Psoas muscle (tissue), 8 donors: ENCODE measurements at regions of chr9 and their contacts with region 1.

Region 1: DNA sequence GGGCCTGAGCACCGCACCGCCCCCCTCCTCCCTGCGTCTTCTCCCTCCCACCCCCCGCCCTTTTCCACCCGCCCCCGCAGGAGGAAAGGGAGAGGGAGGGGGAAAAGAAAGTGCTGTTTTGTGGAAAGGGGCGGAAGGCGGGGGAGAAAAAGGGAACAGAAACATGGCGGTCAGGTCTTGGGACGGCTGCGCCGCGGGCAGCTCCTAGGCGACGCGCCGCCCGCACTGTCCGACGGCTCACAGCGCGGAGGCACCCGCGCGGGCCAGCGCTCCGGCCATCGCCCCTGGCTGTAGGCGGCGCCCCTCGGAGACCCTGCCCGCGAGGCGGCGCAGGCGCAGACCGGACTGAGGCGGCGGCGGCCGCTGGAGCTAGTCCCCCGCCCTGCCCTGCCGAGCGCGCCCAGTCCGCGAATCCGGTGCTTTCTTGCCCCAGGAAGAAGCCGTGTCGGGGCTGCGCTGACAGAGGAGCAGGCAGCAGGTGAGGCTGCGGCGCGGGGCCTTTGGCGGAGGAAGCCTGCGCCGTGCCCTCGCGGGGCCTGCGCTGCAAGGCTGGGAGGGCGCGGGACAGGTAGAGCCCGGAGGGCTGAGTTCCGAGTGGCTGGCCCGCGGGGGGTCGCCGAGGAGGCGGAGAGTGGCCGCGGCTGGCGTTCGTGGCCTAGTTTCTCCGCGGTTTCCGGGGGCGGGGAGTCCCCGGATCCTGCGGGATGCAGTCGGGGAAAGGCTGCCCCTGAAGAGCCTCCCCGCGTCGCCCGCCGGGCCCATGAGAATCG is at the start of gene DENND4C:
- DNase-seq: peak; percentile 86 to 92
- ATAC-seq: peak; percentile 88 to 91 (median 90)
- H3K4me3 ChIP-seq: peak within 1 kb of the TSS; percentile 100
- H3K27ac ChIP-seq: peak within 1 kb of the TSS; percentile 97
- H3K4me1 ChIP-seq: peaks cover 20% of the 10 kb centered on the region
- H3K27me3 ChIP-seq: no peaks in the 10 kb centered on the region
- CTCF ChIP-seq: peak; percentile 8
- total RNA-seq, gene DENND4C: 12.2 to 16.4 (median 13.9) TPM

Region 2: DNA sequence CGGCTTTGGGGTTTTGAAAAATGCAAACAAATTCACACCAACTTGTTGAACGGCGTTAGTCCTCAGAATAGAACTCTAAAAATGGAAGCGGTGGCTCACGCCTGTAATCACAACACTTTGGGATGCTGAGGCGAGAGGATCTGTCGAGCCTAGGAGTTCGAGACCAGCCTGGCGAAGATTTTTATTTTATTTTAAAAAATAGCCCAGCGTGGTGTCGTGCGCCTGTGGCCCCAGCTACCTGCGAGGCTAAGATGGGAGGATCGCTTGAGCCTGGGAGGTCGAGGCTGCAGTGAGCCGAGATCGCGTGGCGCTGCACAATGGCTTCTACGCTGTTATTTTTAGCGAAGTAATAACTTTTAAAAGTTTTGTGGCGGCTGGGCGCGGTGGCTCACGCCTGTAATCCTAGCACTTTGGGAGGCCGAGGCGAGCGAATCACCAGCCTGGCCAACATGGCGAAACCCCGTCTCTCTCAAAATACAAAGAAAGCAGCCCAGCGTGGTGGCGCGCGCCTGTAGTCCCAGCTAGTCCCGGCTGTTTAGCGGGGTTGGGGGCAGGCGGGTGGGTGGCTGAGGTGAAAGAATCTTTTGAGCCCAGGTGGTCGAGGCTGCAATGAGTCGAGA is 102.5 kb before region 1 on chr9:
- intact Hi-C with region 1: loop called in 1 of 2 experiments (anchors 5 kb)
- DNase-seq: peak in 1 of 2 donors; percentile 31
- ATAC-seq: peak; percentile 26 to 67 (median 60)
- H3K4me3 ChIP-seq: peak overlapping the region; percentile 97
- H3K27ac ChIP-seq: peak overlapping the region; percentile 100
- H3K4me1 ChIP-seq: peaks cover 43% of the 10 kb centered on the region
- H3K27me3 ChIP-seq: no peaks in the 10 kb centered on the region
- CTCF ChIP-seq: no peak

Region 3: DNA sequence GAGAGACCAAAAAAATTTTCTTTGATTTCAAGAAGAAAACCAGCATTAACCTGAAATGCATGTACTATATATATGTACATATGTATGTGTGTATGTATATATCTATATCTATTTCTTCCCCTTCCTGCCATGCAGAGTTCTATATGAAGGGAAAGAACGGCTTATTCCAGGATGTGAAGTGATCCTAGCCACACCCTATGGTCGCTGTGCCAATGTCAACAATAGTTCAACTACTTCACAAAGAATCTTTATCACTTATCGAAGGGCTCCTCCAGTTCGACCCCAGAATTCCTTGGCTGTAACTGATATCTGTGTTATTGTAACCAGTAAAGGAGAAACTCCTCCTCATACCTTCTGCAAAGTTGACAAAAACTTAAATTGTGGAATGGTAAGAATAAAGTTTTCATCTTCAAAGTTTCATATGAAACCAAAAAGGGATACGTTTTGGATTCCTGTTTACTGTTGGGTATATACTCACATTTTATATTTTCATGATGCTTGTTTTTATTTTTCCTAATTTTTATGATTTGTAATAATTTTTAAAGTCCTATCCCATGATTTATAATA is 56.2 kb after region 1 on chr9:
- intact Hi-C with region 1: no loop called
- DNase-seq: no peak
- ATAC-seq: no peak
- H3K4me3 ChIP-seq: no peak overlapping the region
- H3K27ac ChIP-seq: no peak overlapping the region
- H3K4me1 ChIP-seq: peaks cover 10% of the 10 kb centered on the region
- H3K27me3 ChIP-seq: no peaks in the 10 kb centered on the region
- CTCF ChIP-seq: no peak

Region 4: GRCh38 chr9:19379697-19380046 is 149.1 kb after region 1 on chr9:
- intact Hi-C with region 1: loop called in 1 of 2 experiments (anchors 10 kb)
- DNase-seq: peak in 1 of 2 donors; percentile 71
- ATAC-seq: peak; percentile 47 to 72 (median 54)
- H3K4me3 ChIP-seq: peak overlapping the region; percentile 83
- H3K27ac ChIP-seq: peak overlapping the region; percentile 93
- H3K4me1 ChIP-seq: peaks cover 14% of the 10 kb centered on the region
- H3K27me3 ChIP-seq: no peaks in the 10 kb centered on the region
- CTCF ChIP-seq: no peak

Region 5: DNA sequence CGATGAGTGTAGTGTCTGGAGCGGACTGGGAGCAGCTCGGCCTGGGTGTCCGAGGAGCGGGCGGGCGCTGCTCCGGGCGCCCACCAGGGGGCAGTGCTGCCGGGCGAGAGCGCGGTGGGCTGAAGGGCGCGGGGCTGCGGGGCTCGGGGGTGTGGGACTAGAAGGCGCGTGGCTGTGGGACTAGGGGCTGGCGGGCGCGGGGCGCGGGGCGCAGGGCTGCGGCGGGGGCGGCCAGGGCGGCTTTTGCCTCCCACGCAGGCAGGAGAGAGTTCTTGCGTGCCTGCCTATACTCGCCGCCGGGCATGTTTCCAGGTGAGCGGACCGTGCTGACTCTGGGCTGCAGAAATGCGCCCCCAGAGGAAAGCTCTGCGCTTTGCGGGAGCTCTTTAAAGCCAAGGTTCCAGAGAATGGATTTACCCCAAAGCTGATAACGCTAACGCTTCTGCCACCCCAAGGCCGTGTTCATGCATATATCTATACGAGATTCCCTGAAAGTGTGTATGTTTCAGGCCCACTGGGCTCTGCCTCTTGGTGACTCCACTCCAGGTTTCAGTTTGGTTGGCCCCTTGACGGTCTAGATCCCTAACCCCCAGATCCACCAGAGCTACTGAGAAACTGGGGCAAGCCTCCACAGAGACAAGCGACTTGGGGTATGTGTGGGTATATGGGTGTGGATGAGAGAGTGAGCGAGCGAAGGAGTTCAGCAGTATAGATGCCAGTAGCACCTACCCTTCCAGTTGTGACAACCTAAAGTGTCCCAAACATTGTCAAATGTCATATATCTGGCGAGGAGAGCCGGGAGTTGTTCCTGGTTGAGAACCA is 234.4 kb after region 1 on chr9:
- intact Hi-C with region 1: loop called in 1 of 2 experiments (anchors 10 kb)
- DNase-seq: peak; percentile 79 to 89
- ATAC-seq: peak; percentile 93 to 98 (median 94)
- H3K4me3 ChIP-seq: peak overlapping the region; percentile 72
- H3K27ac ChIP-seq: peak overlapping the region; percentile 9
- H3K4me1 ChIP-seq: no peaks in the 10 kb centered on the region
- H3K27me3 ChIP-seq: no peaks in the 10 kb centered on the region
- CTCF ChIP-seq: peak; percentile 78